AG04449 (cell line): ENCODE measurements at regions of chr3 and their contacts with region 1.

Region 1: GRCh38 chr3:189148081-189148507 is 23.7 kb upstream of the TPRG1 start:
- DNase-seq: no peak
- H3K4me3 ChIP-seq: no peak overlapping the region
- CTCF ChIP-seq: peak; percentile 68

Region 2: DNA sequence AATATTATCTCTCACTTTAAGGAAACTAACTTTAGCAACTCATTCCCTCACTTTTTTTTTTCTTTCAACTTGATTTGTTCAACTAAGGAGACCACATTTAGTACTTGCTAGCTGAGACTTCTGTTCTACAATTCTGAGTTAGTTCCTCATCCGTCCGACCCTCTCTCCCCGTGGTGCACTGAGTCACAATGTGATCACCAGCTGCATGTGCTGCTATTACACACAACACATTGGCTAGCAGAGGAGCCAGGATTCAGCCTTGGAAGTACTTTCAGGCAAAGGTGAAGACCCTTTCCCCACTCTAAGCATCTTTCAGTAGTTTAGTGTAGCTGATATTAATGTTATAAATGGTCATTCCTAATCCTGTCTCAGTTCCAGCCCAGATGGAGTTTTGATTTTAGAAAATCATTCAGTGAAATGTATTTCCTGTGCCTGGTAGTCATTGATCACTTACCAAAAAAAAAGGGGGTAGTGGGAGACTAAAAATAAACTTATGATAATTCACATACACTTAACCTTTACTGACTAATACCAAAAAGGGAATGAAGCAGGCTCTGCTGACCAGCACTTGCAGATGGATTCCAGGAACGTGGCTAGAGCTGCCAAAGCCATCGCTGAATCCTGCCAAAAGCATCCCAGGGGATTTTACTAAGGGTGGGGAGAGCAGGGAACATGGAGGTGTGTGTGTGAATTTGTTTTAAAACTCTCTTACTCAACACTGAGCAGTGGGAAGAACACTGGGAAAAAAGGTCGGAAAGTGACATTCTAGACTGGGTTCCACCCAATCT is 569.3 kb before region 1 on chr3:
- CTCF ChIA-PET with region 1: no interaction called
- POLR2A ChIA-PET with region 1: no interaction called
- DNase-seq: peak; percentile 80
- H3K4me3 ChIP-seq: no peak overlapping the region
- CTCF ChIP-seq: no peak

Region 3: DNA sequence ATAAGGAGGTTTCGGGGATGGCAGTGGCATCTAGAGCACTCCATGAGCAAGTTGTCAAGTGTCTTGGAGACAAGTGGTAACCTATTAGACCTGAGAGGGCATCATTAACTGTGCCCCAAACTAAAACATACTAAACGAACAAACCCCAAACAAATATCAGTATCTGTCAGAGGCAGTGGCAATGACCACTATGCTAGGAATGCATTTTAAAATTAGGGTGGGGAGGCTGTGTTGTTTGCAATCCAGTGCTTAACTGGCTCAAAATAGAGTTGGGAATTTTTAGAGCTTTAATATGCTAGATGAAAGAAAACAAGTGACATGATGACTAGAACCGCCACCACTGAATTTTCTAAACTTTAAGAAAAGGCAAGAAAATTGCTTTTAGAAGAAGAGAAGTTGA is 28.1 kb before region 1 on chr3:
- CTCF ChIA-PET with region 1: no interaction called
- POLR2A ChIA-PET with region 1: no interaction called
- DNase-seq: no peak
- H3K4me3 ChIP-seq: no peak overlapping the region
- CTCF ChIP-seq: no peak

Region 4: DNA sequence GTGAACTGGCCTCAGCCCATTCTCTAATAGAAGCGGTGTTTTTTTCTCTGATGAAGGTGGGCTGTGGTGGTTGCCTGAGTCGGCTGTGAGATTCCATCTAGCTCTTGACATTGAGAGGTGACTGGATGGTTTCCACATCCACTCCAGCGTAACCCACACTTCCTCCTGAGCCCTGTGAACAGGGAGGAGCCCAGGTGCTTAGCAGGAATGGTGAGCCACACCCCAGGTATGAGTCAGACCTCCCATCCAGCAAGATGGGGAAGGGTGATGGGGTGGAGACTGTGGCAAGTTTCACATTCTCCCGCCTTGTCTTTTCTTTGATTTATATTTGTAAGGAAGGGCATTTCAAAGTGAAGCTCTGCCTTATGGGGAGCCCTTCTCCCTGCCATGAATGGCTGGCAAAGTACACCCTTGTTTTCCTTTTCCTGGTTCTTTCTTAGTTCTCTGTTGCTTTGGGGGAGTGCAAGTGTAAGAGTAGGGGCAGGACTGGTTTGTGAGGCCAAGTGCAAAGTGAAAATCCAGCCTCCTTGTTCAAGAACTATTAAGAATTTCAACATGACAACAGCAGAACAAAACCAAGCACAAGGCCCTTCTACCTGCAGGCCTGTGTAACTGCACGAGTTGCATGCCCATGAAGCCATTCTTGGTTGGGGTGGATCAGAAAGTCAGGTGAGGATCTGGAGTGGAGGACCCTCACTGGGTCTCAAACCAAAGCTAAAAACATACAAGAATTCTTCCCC is 19.1 kb after region 1 on chr3:
- CTCF ChIA-PET with region 1: interaction called, 10 read pairs
- POLR2A ChIA-PET with region 1: no interaction called
- DNase-seq: no peak
- H3K4me3 ChIP-seq: no peak overlapping the region
- CTCF ChIP-seq: no peak